ENCODE measurements at regions of chr16 and their contacts with region 1.

Region 1: DNA sequence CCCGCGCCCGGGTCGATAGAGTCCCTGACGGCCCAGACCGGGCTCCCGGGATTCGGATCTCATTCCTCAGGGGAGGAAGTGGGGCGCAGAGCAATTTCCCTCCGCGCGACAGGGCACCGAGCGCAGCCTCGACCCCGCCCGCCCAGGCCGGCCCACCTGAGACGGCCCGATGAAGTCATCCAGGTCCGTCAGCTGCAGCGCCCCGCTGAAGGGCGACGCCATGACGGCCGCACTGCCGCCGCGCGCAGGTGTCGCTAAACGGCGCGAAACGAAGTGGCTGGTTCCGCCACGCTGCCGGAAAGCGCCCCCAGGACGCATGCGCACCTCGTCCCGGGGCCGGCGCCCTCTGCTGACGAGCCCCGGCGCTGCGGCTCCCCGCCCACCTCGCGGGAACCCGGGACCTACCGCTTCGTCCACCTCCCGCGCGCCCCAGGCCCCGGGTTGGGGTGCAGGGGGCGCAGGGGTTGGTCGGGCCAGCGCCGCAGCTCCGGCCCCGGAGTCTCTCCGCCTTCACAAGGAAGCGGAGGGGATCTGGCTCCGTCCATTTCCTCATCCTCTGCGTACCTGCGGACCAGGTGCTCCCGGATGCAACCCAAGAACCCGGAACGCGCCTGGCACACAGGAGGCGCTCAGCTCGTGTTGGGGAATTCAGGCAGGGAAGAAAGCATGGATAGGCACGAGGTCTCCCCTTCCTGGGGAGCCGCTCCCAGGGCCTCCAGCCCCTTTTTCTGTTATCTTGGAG is at the start of gene CIAO3:
- DNase-seq: peak; percentile 85 to 99 (median 91)
- ATAC-seq: peak; percentile 93
- H3K4me3 ChIP-seq: peak within 1 kb of the TSS; percentile 81
- H3K4me3 Mint-ChIP-seq: peak within 1 kb of the TSS; percentile 63 to 85 (median 80)
- H3K27ac ChIP-seq: peak within 1 kb of the TSS; percentile 86
- H3K27ac Mint-ChIP-seq: peak within 1 kb of the TSS in 7 of 9 donors; percentile 26 to 81 (median 77)
- H3K4me1 ChIP-seq: peaks cover 4 to 10% of the 10 kb centered on the region in 2 donors
- H3K4me1 Mint-ChIP-seq: peaks cover 0 to 16% (median 5%) of the 10 kb centered on the region in 7 donors
- H3K27me3 ChIP-seq: no peaks in the 10 kb centered on the region
- H3K27me3 Mint-ChIP-seq: no peaks in the 10 kb centered on the region
- total RNA-seq, gene CIAO3: 39.0 to 55.5 (median 46.1) TPM

Region 2: GRCh38 chr16:684067-684794 is 56.7 kb before region 1 on chr16 and contains the start of gene JMJD8:
- CTCF ChIA-PET with region 1: no interaction called
- POLR2A ChIA-PET with region 1: no interaction called
- intact Hi-C with region 1: loop called in 1 of 2 experiments (anchors 2 kb)
- DNase-seq: peak; percentile 88 to 97 (median 91)
- ATAC-seq: peak; percentile 75
- H3K4me3 ChIP-seq: peak within 1 kb of the TSS; percentile 52
- H3K4me3 Mint-ChIP-seq: peak within 1 kb of the TSS; percentile 58 to 87 (median 76)
- H3K27ac ChIP-seq: peak within 1 kb of the TSS; percentile 78
- H3K27ac Mint-ChIP-seq: peak within 1 kb of the TSS in 6 of 9 donors; percentile 38 to 82 (median 58)
- H3K4me1 ChIP-seq: peaks cover 9 to 36% of the 10 kb centered on the region in 2 donors
- H3K4me1 Mint-ChIP-seq: peaks cover 10 to 31% (median 22%) of the 10 kb centered on the region in 7 donors
- H3K27me3 ChIP-seq: no peaks in the 10 kb centered on the region
- H3K27me3 Mint-ChIP-seq: no peaks in the 10 kb centered on the region
- total RNA-seq, gene JMJD8: 26.8 to 48.1 (median 37.2) TPM

Region 3: GRCh38 chr16:720990-721764 is 19.8 kb before region 1 on chr16 and contains the start of gene ANTKMT:
- CTCF ChIA-PET with region 1: interaction called, 5 read pairs
- POLR2A ChIA-PET with region 1: interaction called, 11 read pairs
- intact Hi-C with region 1: loop called in 1 of 2 experiments (anchors 2 kb)
- DNase-seq: peak; percentile 53 to 80 (median 65)
- ATAC-seq: peak; percentile 82
- H3K4me3 ChIP-seq: peak within 1 kb of the TSS; percentile 62
- H3K4me3 Mint-ChIP-seq: peak within 1 kb of the TSS; percentile 72 to 92 (median 82)
- H3K27ac ChIP-seq: peak within 1 kb of the TSS; percentile 60
- H3K27ac Mint-ChIP-seq: peak within 1 kb of the TSS in 7 of 9 donors; percentile 38 to 67 (median 55)
- H3K4me1 ChIP-seq: peaks cover 18 to 25% of the 10 kb centered on the region in 2 donors
- H3K4me1 Mint-ChIP-seq: peaks cover 0 to 30% (median 17%) of the 10 kb centered on the region in 7 donors
- H3K27me3 ChIP-seq: no peaks in the 10 kb centered on the region
- H3K27me3 Mint-ChIP-seq: peaks cover 0 to 20% (median 0%) of the 10 kb centered on the region in 5 donors
- total RNA-seq, gene ANTKMT: 11.9 to 20.7 (median 13.6) TPM

Region 4: DNA sequence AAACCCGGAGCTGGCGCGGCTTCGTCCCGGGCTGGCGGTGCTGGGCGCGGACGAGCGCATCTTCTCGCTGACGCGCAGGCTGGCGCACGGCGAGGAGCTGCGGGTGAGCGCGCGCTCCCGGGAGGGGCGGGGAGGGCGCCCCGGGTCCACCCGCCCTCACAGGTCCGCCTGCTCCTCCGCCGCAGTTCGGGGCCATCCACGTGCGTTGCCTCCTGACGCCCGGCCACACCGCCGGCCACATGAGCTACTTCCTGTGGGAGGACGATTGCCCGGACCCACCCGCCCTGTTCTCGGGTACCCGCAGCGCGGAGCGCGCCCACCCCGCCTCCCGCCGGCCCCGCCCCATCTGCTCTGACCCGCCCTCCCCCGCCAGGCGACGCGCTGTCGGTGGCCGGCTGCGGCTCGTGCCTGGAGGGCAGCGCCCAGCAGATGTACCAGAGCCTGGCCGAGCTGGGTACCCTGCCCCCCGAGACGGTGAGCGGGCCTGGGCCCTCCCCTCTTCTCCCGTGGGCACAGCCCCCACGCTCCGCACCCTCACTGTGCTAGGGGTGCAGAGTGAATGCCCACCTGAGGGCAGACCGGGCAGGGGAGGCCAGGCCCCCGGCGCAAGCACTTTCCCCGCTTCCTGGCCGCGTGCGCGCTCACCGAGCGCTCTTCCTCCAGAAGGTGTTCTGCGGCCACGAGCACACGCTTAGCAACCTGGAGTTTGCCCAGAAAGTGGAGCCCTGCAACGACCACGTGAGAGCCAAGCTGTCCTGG is 12.6 kb before region 1 on chr16:
- CTCF ChIA-PET with region 1: interaction called, 5 read pairs
- POLR2A ChIA-PET with region 1: interaction called, 11 read pairs
- intact Hi-C with region 1: loop called (anchors 1 to 2 kb)
- DNase-seq: peak in 7 of 9 donors; percentile 46 to 64 (median 55)
- ATAC-seq: peak; percentile 85
- H3K4me3 ChIP-seq: peak overlapping the region; percentile 39
- H3K4me3 Mint-ChIP-seq: peak overlapping the region in 5 of 10 donors; percentile 25 to 87 (median 42)
- H3K27ac ChIP-seq: peak overlapping the region; percentile 21
- H3K27ac Mint-ChIP-seq: no peak overlapping the region
- H3K4me1 ChIP-seq: peaks cover 0 to 12% of the 10 kb centered on the region in 2 donors
- H3K4me1 Mint-ChIP-seq: no peaks in the 10 kb centered on the region
- H3K27me3 ChIP-seq: no peaks in the 10 kb centered on the region
- H3K27me3 Mint-ChIP-seq: peaks cover 0 to 6% (median 0%) of the 10 kb centered on the region in 5 donors

Region 5: GRCh38 chr16:760545-761343 is 19.8 kb after region 1 on chr16 and contains the start of gene MSLN:
- CTCF ChIA-PET with region 1: no interaction called
- POLR2A ChIA-PET with region 1: no interaction called
- intact Hi-C with region 1: no loop called
- DNase-seq: no peak
- ATAC-seq: no peak
- H3K4me3 ChIP-seq: no peak within 1 kb of the TSS
- H3K4me3 Mint-ChIP-seq: no peak within 1 kb of the TSS
- H3K27ac ChIP-seq: no peak within 1 kb of the TSS
- H3K27ac Mint-ChIP-seq: no peak within 1 kb of the TSS
- H3K4me1 ChIP-seq: no peaks in the 10 kb centered on the region
- H3K4me1 Mint-ChIP-seq: peaks cover 0 to 4% (median 0%) of the 10 kb centered on the region in 7 donors
- H3K27me3 ChIP-seq: no peaks in the 10 kb centered on the region
- H3K27me3 Mint-ChIP-seq: peaks cover 0 to 8% (median 5%) of the 10 kb centered on the region in 5 donors
- total RNA-seq, gene MSLN: 0.64 TPM in 1 of 5 experiments, not detected in the others

Region 6: DNA sequence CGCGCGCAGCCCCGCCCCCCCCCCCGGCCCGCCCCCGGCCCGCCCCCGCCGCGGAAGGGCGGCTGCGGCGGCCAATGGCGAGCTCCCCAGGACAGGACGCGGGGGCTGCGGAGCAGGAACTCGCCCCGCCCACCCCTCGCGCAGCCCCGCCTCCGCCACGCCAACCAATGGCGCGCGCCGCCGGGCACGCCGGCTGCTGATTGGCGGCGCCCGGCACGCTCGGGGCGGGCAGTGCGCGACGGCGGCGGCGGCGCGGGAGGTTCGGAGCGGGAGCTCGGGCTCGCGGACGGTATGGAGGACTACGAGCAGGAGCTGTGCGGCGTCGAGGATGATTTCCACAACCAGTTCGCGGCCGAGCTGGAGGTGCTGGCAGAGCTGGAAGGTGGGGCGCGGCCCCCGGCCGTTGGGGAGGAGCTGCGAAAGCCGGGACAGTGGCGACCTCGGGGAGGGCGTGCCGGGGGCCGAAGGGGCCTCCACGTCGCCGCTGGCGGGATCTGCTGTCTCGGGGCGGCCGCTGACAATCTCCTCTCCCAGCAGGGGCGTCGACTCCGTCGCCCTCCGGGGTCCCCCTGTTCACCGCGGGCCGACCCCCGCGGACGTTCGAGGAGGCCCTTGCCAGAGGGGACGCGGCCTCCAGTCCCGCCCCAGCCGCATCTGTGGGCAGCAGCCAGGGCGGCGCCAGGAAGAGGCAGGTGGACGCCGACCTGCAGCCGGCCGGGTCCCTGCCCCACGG is 47.6 kb after region 1 on chr16 and contains the start of gene CHTF18:
- CTCF ChIA-PET with region 1: no interaction called
- POLR2A ChIA-PET with region 1: interaction called, 4 read pairs
- intact Hi-C with region 1: loop called (anchors 1 to 2 kb)
- DNase-seq: peak; percentile 90 to 95 (median 95)
- ATAC-seq: peak; percentile 98
- H3K4me3 ChIP-seq: peak within 1 kb of the TSS; percentile 74
- H3K4me3 Mint-ChIP-seq: peak within 1 kb of the TSS; percentile 78 to 90 (median 86)
- H3K27ac ChIP-seq: peak within 1 kb of the TSS; percentile 83
- H3K27ac Mint-ChIP-seq: peak within 1 kb of the TSS in 6 of 9 donors; percentile 53 to 89 (median 78)
- H3K4me1 ChIP-seq: peaks cover 5 to 8% of the 10 kb centered on the region in 2 donors
- H3K4me1 Mint-ChIP-seq: peaks cover 0 to 14% (median 5%) of the 10 kb centered on the region in 7 donors
- H3K27me3 ChIP-seq: no peaks in the 10 kb centered on the region
- H3K27me3 Mint-ChIP-seq: no peaks in the 10 kb centered on the region
- total RNA-seq, gene CHTF18: 32.0 to 74.8 (median 51.7) TPM

Measured in naive thymus-derived CD4-positive, alpha-beta T cell (primary cell).